ENCODE measurements at regions of chr9 and their contacts with region 1.

Region 1: GRCh38 chr9:38130724-38131123 is 61.7 kb upstream of the SHB start:
- DNase-seq: no peak
- ATAC-seq: no peak
- H3K4me3 ChIP-seq: no peak overlapping the region
- H3K27ac ChIP-seq: no peak overlapping the region
- H3K4me1 ChIP-seq: no peaks in the 10 kb centered on the region
- H3K27me3 ChIP-seq: no peaks in the 10 kb centered on the region

Region 2: GRCh38 chr9:38079461-38080031 is 51.2 kb before region 1 on chr9:
- intact Hi-C with region 1: loop called in 1 of 2 experiments (anchors 10 kb)
- DNase-seq: peak in 1 of 2 donors; percentile 83
- ATAC-seq: no peak
- H3K4me3 ChIP-seq: no peak overlapping the region
- H3K27ac ChIP-seq: no peak overlapping the region
- H3K4me1 ChIP-seq: peaks cover 0 to 2% of the 10 kb centered on the region in 2 donors
- H3K27me3 ChIP-seq: no peaks in the 10 kb centered on the region